AG04449 (cell line): ENCODE measurements at regions of chr11 and their contacts with region 1.

Region 1: GRCh38 chr11:73157053-73158010 is 15.2 kb upstream of the FCHSD2 start:
- DNase-seq: peak; percentile 65
- H3K4me3 ChIP-seq: peak overlapping the region; percentile 12; the same call in 1 of the 2 replicates
- CTCF ChIP-seq: no peak

Region 2: GRCh38 chr11:72831513-72832300 is 325.6 kb before region 1 on chr11:
- CTCF ChIA-PET with region 1: interaction called, 35 read pairs
- POLR2A ChIA-PET with region 1: no interaction called
- DNase-seq: no peak
- H3K4me3 ChIP-seq: no peak overlapping the region
- CTCF ChIP-seq: peak; percentile 97